ENCODE measurements at regions of chr19 and their contacts with region 1.

Region 1: GRCh38 chr19:12333162-12334159 is at the start of gene ZNF563:
- DNase-seq: peak; percentile 96 to 99 (median 98)
- ATAC-seq: peak; percentile 92
- H3K4me3 ChIP-seq: peak within 1 kb of the TSS; percentile 86
- H3K4me3 Mint-ChIP-seq: peak within 1 kb of the TSS; percentile 100
- H3K27ac ChIP-seq: peak within 1 kb of the TSS; percentile 84 to 90
- H3K27ac Mint-ChIP-seq: peak within 1 kb of the TSS; percentile 96
- H3K4me1 ChIP-seq: peaks cover 25% of the 10 kb centered on the region
- H3K4me1 Mint-ChIP-seq: peaks cover 47% of the 10 kb centered on the region
- H3K27me3 ChIP-seq: no peaks in the 10 kb centered on the region
- H3K27me3 Mint-ChIP-seq: no peaks in the 10 kb centered on the region
- CTCF ChIP-seq: no peak
- total RNA-seq, gene ZNF563: 4.5 to 5.1 TPM

Region 2: GRCh38 chr19:11887611-11888531 is 445.6 kb before region 1 on chr19 and contains the start of gene ZNF69:
- CTCF ChIA-PET with region 1: no interaction called
- POLR2A ChIA-PET with region 1: no interaction called
- intact Hi-C with region 1: loop called in 1 of 2 experiments (anchors 10 kb)
- DNase-seq: peak; percentile 23 to 75 (median 51)
- ATAC-seq: peak; percentile 88
- H3K4me3 ChIP-seq: peak within 1 kb of the TSS; percentile 88
- H3K4me3 Mint-ChIP-seq: peak within 1 kb of the TSS; percentile 98
- H3K27ac ChIP-seq: peak within 1 kb of the TSS in 1 of 2 donors; percentile 50
- H3K27ac Mint-ChIP-seq: peak within 1 kb of the TSS; percentile 93
- H3K4me1 ChIP-seq: peaks cover 22% of the 10 kb centered on the region
- H3K4me1 Mint-ChIP-seq: peaks cover 28% of the 10 kb centered on the region
- H3K27me3 ChIP-seq: no peaks in the 10 kb centered on the region
- H3K27me3 Mint-ChIP-seq: no peaks in the 10 kb centered on the region
- CTCF ChIP-seq: no peak
- total RNA-seq, gene ZNF69: 2.4 to 3.5 TPM

Region 3: GRCh38 chr19:12162882-12163806 is 170.3 kb before region 1 on chr19 and contains the start of gene ZNF136:
- CTCF ChIA-PET with region 1: no interaction called
- POLR2A ChIA-PET with region 1: interaction called, 36 read pairs
- intact Hi-C with region 1: loop called (anchors 2 kb)
- DNase-seq: peak; percentile 84 to 97 (median 90)
- ATAC-seq: peak; percentile 99
- H3K4me3 ChIP-seq: peak within 1 kb of the TSS; percentile 89
- H3K4me3 Mint-ChIP-seq: peak within 1 kb of the TSS; percentile 97
- H3K27ac ChIP-seq: peak within 1 kb of the TSS; percentile 88 to 96
- H3K27ac Mint-ChIP-seq: peak within 1 kb of the TSS; percentile 89
- H3K4me1 ChIP-seq: peaks cover 42% of the 10 kb centered on the region
- H3K4me1 Mint-ChIP-seq: peaks cover 50% of the 10 kb centered on the region
- H3K27me3 ChIP-seq: no peaks in the 10 kb centered on the region
- H3K27me3 Mint-ChIP-seq: no peaks in the 10 kb centered on the region
- CTCF ChIP-seq: no peak
- total RNA-seq, gene ZNF136: 40.5 to 45.6 TPM

Region 4: DNA sequence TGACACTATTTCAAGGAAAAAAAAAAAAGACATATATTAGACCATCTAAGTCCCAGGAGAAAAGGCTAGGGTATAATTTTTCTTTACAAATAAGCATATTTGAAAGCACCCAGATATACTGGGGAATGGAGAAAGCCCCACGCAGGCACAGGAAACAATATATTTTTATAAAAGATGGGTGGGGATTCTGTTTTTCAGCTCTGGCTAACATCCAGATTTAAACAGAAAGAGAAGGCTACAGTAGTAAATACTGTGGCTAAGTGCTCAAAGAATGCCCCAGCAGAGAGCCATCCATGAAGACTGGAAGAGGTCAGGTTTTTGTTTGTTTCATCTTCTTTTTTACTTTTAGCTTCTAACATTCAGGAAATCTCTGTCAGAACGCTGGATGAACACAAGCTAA is 54.7 kb before region 1 on chr19:
- CTCF ChIA-PET with region 1: no interaction called
- POLR2A ChIA-PET with region 1: interaction called, 18 read pairs
- intact Hi-C with region 1: no loop called
- DNase-seq: no peak
- ATAC-seq: no peak
- H3K4me3 ChIP-seq: no peak overlapping the region
- H3K4me3 Mint-ChIP-seq: peak overlapping the region; percentile 50
- H3K27ac ChIP-seq: no peak overlapping the region
- H3K27ac Mint-ChIP-seq: peak overlapping the region; percentile 86
- H3K4me1 ChIP-seq: peaks cover 13% of the 10 kb centered on the region
- H3K4me1 Mint-ChIP-seq: peaks cover 63% of the 10 kb centered on the region
- H3K27me3 ChIP-seq: no peaks in the 10 kb centered on the region
- H3K27me3 Mint-ChIP-seq: no peaks in the 10 kb centered on the region
- CTCF ChIP-seq: no peak

Region 5: DNA sequence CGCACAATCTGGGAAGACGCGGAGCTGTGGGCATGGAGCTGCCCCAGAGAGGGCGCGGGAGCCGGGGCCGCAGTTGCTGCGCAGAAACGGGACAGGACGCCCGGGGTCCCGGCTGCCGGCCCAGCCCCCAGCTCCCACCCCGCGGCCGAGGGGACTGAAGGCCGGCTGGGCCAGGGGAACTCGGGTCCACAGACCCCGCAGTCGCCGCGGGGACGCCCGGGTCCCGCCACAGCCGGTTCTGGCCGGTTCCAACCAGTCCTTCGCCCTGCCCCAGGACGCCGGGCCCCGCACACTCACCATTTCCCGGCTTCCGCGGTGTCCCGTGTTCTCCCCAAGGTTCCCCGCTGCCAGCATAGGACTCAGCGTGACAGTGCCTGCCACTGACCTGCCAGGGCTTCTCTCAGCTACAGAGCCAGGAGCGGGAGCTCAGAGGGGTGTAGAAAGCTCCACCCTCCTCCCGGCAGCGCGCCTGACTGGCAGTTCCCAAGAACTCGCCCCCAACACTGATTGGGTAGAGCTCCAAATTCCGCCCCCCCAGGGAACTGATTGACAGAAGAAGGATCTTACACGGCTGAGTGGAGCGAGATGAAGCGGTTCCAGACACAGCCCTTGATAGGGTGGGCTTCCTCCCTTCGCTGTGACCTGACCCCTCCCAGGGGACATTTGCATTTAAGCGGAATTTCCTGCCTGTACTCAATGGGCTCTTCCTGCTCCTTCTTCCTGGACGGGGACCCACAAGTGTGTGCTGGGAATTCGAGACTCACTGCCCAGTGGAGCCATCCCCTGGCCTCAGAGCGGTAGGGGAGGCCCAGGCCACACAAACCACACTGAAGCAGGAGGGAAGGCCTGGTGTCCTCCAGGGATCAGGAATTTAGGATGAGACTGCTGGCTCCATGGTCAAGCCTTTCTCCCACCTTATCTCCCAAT is 32.0 kb after region 1 on chr19 and contains the start of gene ZNF442:
- CTCF ChIA-PET with region 1: interaction called, 6 read pairs
- POLR2A ChIA-PET with region 1: interaction called, 21 read pairs
- intact Hi-C with region 1: loop called in 1 of 2 experiments (anchors 2 kb)
- DNase-seq: peak; percentile 65 to 89 (median 75)
- ATAC-seq: peak; percentile 96
- H3K4me3 ChIP-seq: peak within 1 kb of the TSS; percentile 71
- H3K4me3 Mint-ChIP-seq: peak within 1 kb of the TSS; percentile 95
- H3K27ac ChIP-seq: no peak within 1 kb of the TSS
- H3K27ac Mint-ChIP-seq: peak within 1 kb of the TSS; percentile 34
- H3K4me1 ChIP-seq: peaks cover 19% of the 10 kb centered on the region
- H3K4me1 Mint-ChIP-seq: peaks cover 25% of the 10 kb centered on the region
- H3K27me3 ChIP-seq: no peaks in the 10 kb centered on the region
- H3K27me3 Mint-ChIP-seq: no peaks in the 10 kb centered on the region
- CTCF ChIP-seq: no peak
- total RNA-seq, gene ZNF442: 0.52 to 0.67 TPM

Region 6: DNA sequence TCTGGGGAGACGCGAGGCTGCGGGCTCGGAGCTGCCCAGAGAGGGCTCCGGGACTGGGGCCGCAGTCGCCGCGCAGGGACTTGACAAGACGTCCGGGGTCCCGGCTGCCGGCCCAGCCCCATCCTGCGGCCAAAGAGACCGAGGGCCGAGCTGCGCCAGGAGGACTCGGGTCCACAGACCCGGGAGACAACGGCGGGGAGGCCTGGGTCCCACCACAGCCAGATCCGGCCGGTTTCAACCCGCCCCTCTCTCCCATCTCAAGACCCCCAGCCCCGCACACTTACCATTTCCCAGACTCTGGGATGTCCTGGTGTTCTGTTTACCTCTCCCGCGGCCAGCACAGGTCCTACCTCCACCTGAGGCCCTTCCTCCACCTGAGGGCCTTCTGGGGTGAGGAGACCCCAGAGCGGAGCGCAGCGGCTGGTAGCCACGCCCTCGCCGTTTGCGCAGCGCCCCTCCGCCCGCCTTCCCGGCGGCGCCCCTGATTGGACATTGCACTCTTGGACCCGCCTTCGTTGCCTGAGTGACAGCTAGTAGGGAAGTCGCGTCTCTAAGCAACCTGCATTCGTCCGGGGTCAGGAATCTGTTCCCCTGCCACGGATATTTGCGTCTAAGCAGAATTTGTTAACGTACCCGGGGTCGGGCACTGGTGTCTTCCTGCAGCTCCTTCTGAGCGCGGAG is 151.1 kb after region 1 on chr19 and contains the start of gene ZNF709:
- CTCF ChIA-PET with region 1: no interaction called
- POLR2A ChIA-PET with region 1: interaction called, 13 read pairs
- intact Hi-C with region 1: no loop called
- DNase-seq: peak; percentile 73 to 93 (median 86)
- ATAC-seq: peak; percentile 98
- H3K4me3 ChIP-seq: peak within 1 kb of the TSS; percentile 99
- H3K4me3 Mint-ChIP-seq: peak within 1 kb of the TSS; percentile 98
- H3K27ac ChIP-seq: peak within 1 kb of the TSS; percentile 52 to 68
- H3K27ac Mint-ChIP-seq: peak within 1 kb of the TSS; percentile 97
- H3K4me1 ChIP-seq: peaks cover 37% of the 10 kb centered on the region
- H3K4me1 Mint-ChIP-seq: peaks cover 36% of the 10 kb centered on the region
- H3K27me3 ChIP-seq: no peaks in the 10 kb centered on the region
- H3K27me3 Mint-ChIP-seq: no peaks in the 10 kb centered on the region
- CTCF ChIP-seq: no peak
- total RNA-seq, gene ZNF709: 3.5 to 3.7 TPM